Activated CD8-positive, alpha-beta T cell treated with anti-CD3 and anti-CD28 coated beads for 36 hours (primary cell): ENCODE measurements at regions of chr2 and their contacts with region 1.

Region 1: GRCh38 chr2:25337276-25337675 is 4.4 kb downstream of the DNMT3A start:
- DNase-seq: peak; percentile 51
- ATAC-seq: peak; percentile 21
- H3K4me3 Mint-ChIP-seq: peak overlapping the region; percentile 24
- H3K27ac Mint-ChIP-seq: peak overlapping the region; percentile 76
- H3K4me1 Mint-ChIP-seq: peaks cover 72% of the 10 kb centered on the region
- H3K27me3 Mint-ChIP-seq: no peaks in the 10 kb centered on the region
- CTCF ChIP-seq: no peak

Region 2: DNA sequence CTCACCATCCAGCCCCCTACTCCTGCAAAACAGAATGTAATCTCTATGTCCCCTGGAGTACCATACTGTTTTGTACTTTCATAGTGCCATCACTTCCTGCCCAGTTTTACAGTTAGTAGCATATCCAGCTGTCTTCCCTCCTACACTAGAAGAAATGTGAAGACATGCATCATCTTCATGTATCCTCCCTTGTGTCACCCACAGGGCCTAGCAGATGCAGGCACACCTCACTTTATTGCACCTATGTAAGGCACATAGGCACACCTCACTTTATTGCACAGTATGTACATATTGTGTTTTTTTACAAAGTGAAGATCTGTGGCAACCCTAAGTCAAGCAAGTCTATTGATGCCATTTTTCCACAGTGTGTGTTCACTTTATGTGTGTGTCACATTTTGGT is 377.5 kb before region 1 on chr2:
- CTCF ChIA-PET with region 1: no interaction called
- POLR2A ChIA-PET with region 1: no interaction called
- intact Hi-C with region 1: no loop called
- DNase-seq: no peak
- ATAC-seq: no peak
- H3K4me3 Mint-ChIP-seq: no peak overlapping the region
- H3K27ac Mint-ChIP-seq: peak overlapping the region; percentile 0
- H3K4me1 Mint-ChIP-seq: peaks cover 7% of the 10 kb centered on the region
- H3K27me3 Mint-ChIP-seq: no peaks in the 10 kb centered on the region
- CTCF ChIP-seq: no peak

Region 3: DNA sequence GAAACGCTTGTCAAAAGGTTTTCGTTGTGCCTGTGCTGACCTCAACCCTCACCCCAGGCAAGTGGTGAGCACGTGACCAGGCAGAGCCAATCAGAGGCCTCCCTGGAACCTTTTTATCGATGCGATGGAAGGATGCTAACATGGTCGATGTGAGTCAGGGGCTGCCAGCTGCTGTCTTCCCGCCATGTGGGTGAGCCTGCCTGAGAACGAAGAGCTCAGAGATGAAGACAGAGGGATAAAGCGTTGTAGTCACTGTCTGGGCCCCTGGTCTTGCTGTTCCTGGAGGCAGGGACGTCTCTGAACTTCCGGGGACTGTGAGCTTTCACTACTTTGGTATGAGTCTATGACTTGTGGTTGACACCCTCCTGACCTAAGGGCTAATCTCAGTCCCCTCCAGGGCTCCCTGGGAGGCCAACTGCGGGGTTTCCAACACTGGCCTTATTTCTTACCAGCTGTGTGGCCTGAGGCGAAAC is 14.2 kb before region 1 on chr2:
- CTCF ChIA-PET with region 1: interaction called, 7 read pairs
- POLR2A ChIA-PET with region 1: interaction called, 26 read pairs
- intact Hi-C with region 1: no loop called
- DNase-seq: peak; percentile 87
- ATAC-seq: peak; percentile 75
- H3K4me3 Mint-ChIP-seq: peak overlapping the region; percentile 65
- H3K27ac Mint-ChIP-seq: peak overlapping the region; percentile 97
- H3K4me1 Mint-ChIP-seq: peaks cover 64% of the 10 kb centered on the region
- H3K27me3 Mint-ChIP-seq: no peaks in the 10 kb centered on the region
- CTCF ChIP-seq: no peak